Activated CD4-positive, alpha-beta T cell treated with anti-CD3 and anti-CD28 coated beads, Interleukin-2, amount 10 ng/mL, durations not matched to agents 7 days and 5 days (primary cell): ENCODE measurements at regions of chr19 and their contacts with region 1.

Region 1: GRCh38 chr19:29622138-29623070 is 16.3 kb downstream of the POP4 start:
- DNase-seq: peak; percentile 53
- H3K4me3 Mint-ChIP-seq: peak overlapping the region; percentile 77
- H3K27ac Mint-ChIP-seq: peak overlapping the region; percentile 97
- H3K4me1 Mint-ChIP-seq: peaks cover 57% of the 10 kb centered on the region
- H3K27me3 Mint-ChIP-seq: no peaks in the 10 kb centered on the region

Region 2: DNA sequence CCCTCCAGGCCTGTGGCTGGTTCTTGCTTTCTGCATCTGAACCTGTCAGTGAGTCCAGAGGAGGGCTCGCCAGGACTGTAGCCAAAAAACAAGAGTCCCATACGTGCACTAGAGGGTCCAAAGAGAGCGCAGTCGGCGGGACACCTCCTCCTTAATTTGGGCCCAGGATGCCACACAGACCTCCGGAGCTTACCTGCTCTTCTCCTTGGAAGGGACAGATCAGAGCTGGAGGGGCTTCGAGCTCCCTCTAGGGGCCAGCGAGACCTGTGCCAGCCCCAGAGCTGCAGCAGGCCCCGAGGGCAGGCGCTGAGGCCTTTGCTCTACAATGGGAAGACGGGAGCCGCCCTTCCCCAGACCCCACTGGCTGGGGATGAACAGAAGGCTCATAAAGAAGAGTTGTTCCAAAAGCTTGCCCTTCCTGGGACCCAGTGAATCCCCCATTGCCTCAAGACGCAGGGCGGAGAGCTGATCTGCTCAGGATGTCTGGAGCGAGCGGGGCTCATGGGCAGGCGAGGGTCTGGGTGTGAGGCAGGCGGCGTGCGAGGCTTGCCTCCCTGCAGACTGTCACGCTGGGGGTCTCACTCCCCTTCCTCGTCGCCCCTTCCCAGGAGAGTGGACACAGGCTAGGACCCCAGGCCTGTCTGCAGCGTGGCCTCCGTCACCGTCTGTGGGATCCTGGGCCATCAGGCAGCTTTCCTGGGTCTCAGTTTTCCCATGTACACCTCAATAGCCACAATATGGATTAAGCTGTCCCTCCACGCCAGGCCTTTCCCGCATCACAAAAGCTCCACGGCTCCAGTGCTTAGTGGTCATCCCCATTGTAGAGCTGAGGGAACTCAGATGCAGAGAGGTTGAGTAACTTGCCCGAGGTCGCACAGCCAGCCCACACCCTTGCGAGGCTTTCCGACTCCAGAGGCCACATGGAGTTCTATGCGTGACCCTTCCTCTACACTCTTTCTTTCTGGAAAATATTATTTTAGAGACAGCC is 143.5 kb before region 1 on chr19:
- CTCF ChIA-PET with region 1: no interaction called
- POLR2A ChIA-PET with region 1: no interaction called
- DNase-seq: no peak
- H3K4me3 Mint-ChIP-seq: no peak overlapping the region
- H3K27ac Mint-ChIP-seq: no peak overlapping the region
- H3K4me1 Mint-ChIP-seq: no peaks in the 10 kb centered on the region
- H3K27me3 Mint-ChIP-seq: peaks cover 4% of the 10 kb centered on the region

Region 3: DNA sequence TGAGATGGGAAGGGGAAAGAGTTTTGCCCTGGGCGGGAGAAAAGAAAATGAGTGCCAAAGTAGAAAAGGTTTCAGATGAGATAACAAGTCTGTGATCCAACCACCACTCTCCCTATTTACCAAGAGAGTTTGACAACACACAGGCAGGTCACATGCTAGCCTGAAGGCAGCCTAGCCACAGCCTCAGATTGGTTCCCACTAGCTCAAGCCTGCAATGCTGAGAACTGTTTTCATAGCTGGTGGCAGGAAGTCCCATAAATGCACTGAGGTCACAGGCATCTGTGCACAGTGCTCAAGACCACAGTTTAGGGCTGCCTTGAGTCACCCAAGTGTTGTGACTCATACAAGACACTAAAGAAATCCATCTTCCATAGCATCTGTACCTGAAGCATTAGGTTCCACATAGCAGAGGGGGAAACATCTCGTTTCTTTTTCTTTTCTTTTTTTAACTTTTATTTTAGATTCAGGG is 34.9 kb before region 1 on chr19:
- CTCF ChIA-PET with region 1: no interaction called
- POLR2A ChIA-PET with region 1: no interaction called
- DNase-seq: peak; percentile 80
- H3K4me3 Mint-ChIP-seq: no peak overlapping the region
- H3K27ac Mint-ChIP-seq: peak overlapping the region; percentile 82
- H3K4me1 Mint-ChIP-seq: peaks cover 33% of the 10 kb centered on the region
- H3K27me3 Mint-ChIP-seq: peaks cover 18% of the 10 kb centered on the region

Region 4: GRCh38 chr19:29665215-29665825 is 42.9 kb after region 1 on chr19 and contains the start of gene PLEKHF1:
- CTCF ChIA-PET with region 1: interaction called, 10 read pairs
- POLR2A ChIA-PET with region 1: interaction called, 4 read pairs
- DNase-seq: peak; percentile 85
- H3K4me3 Mint-ChIP-seq: peak within 1 kb of the TSS; percentile 88
- H3K27ac Mint-ChIP-seq: peak within 1 kb of the TSS; percentile 95
- H3K4me1 Mint-ChIP-seq: peaks cover 69% of the 10 kb centered on the region
- H3K27me3 Mint-ChIP-seq: no peaks in the 10 kb centered on the region
- total RNA-seq, gene PLEKHF1: 49.4 to 52.1 TPM

Region 5: GRCh38 chr19:29671393-29672160 is 49.2 kb after region 1 on chr19:
- CTCF ChIA-PET with region 1: interaction called, 14 read pairs
- POLR2A ChIA-PET with region 1: no interaction called
- DNase-seq: peak; percentile 88
- H3K4me3 Mint-ChIP-seq: peak overlapping the region; percentile 88
- H3K27ac Mint-ChIP-seq: peak overlapping the region; percentile 95
- H3K4me1 Mint-ChIP-seq: peaks cover 86% of the 10 kb centered on the region
- H3K27me3 Mint-ChIP-seq: no peaks in the 10 kb centered on the region